ENCODE measurements at regions of chr4 and their contacts with region 1.

Region 1: DNA sequence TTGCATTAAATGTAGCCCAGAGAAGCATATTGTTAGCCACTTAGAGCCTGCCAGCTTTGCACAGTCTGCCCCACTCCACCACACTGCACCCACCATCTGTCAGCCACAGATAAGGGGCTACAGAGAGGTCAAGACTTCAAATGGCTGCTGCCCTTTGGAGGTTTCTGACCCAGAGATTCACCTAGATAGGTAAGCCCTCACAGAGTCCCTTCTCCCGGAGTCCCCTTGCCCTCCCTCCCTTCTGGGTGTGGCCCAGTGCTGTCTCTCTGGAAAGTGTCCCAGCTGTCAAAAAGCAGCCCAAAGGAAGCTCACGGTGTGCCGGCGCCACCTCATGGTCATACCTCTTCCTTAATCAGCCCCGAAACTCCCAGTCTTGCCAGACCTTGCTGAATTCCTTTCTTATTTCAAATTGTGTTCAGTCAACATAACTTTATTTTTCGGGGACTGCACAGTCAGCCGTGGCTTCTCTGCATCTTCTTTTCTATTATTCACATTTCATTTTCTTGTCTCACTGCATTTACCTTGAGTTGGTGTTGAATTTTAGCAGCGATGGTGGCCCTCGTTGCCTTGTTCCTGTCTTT is 14.1 kb upstream of the GRPEL1 start:
- DNase-seq: no peak
- ATAC-seq: peak; percentile 92
- H3K4me3 ChIP-seq: no peak overlapping the region
- H3K27ac ChIP-seq: no peak overlapping the region
- H3K4me1 ChIP-seq: no peaks in the 10 kb centered on the region
- H3K27me3 ChIP-seq: no peaks in the 10 kb centered on the region
- CTCF ChIP-seq: peak; percentile 74

Region 2: DNA sequence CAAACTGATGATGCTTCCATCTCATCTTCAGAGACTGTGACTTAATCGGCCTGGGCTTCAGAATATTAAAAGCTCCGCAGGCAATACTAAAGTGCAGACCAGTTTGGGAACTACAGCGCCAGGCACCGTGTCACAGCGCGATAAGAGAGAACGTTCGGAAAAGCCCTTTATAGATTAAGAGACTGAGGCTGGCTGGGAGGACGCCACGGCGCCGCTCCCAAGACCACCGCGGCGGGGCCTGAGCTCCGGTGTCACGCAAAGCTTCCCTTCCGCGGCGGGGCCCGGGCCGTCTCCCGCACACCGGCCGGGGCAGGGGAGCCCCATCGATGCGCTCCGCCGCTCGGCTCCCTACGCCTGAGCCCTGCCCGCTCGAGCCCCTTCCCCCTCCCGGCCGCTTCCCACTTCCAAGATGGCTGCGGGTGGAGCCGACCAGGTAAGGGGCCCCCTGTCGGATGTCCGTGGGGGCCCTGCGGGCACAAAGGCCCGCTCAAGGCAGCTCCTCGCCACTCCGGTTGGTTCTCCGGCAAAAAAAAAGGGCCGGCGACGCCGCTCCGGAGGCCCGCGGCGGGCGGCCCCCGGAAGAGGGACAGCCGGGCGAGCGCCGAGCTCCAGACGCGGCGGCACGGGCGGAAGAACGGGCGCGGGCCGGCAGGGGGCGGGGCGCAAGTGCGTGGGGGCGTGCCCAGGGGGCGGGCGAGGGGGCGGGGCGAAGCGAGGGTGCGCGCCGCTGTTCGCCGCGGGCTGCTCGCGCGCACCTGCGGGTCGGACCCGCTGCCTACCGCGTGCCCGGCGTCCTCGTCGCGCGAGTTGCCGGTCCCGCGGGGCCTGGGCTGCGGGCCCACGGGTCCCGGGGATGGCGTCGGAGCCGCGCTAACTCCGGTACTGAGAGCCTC is 172.7 kb before region 1 on chr4 and contains the start of gene TBC1D14:
- CTCF ChIA-PET with region 1: interaction called, 3 read pairs
- POLR2A ChIA-PET with region 1: interaction called, 3 read pairs
- in situ Hi-C with region 1: no loop called
- intact Hi-C with region 1: loop called (anchors 5 kb)
- DNase-seq: no peak
- ATAC-seq: peak; percentile 84
- H3K4me3 ChIP-seq: peak within 1 kb of the TSS; percentile 61 to 74
- H3K27ac ChIP-seq: peak within 1 kb of the TSS; percentile 84
- H3K4me1 ChIP-seq: peaks cover 26% of the 10 kb centered on the region
- H3K27me3 ChIP-seq: no peaks in the 10 kb centered on the region
- CTCF ChIP-seq: peak; percentile 36
- total RNA-seq, gene TBC1D14: 36.3 TPM

Region 3: DNA sequence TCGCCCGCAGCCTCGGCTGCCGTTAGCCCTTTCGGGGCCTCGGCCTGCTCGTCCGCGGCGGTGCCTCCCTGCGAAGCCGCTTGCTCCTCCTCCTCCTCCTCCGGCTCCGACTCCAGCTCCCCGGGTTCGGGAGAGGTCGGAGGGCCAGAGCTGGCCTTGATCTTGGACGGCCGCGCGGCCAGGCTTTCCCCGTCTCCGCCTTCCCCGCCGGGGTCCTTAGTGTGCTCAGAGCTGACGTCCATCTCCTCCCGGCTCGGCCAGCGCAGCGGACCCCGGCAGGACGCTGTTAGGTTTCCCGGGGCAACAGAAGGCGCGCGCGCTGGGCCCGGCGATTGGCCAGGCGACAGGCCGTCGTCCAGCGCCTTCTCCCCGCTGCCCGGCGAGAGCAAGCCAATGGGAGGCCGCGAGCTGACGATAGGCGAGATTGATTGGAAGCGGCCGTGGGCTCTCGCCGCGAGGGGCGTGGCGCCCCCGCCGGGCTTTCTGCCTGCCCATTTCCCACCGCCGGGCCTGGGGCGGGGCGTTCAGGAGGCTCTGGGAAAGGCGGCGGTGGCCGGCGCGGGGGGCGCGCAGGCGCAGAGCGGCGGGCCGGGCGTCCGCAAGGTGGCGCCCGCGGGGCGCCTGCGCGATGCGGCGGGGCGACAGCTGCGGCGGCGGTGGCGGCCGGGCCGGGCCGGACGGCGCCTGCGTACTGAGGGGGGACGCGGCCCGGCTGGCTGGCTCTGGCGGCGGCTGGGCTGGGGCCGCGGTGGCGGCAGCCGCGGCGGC is 39.1 kb before region 1 on chr4 and contains the start of gene TADA2B:
- CTCF ChIA-PET with region 1: interaction called, 10 read pairs
- POLR2A ChIA-PET with region 1: no interaction called
- in situ Hi-C with region 1: no loop called
- intact Hi-C with region 1: no loop called
- DNase-seq: peak; percentile 53
- ATAC-seq: peak; percentile 93
- H3K4me3 ChIP-seq: peak within 1 kb of the TSS; percentile 76 to 80
- H3K27ac ChIP-seq: peak within 1 kb of the TSS; percentile 81
- H3K4me1 ChIP-seq: peaks cover 30% of the 10 kb centered on the region
- H3K27me3 ChIP-seq: no peaks in the 10 kb centered on the region
- CTCF ChIP-seq: peak; percentile 83; the same call in 1 of the 2 replicates
- total RNA-seq, gene TADA2B: 17.6 TPM

Region 4: GRCh38 chr4:7691982-7692381 is 610.0 kb after region 1 on chr4:
- CTCF ChIA-PET with region 1: no interaction called
- POLR2A ChIA-PET with region 1: no interaction called
- in situ Hi-C with region 1: no loop called
- intact Hi-C with region 1: no loop called
- DNase-seq: no peak
- ATAC-seq: no peak
- H3K4me3 ChIP-seq: no peak overlapping the region
- H3K27ac ChIP-seq: no peak overlapping the region
- H3K4me1 ChIP-seq: no peaks in the 10 kb centered on the region
- H3K27me3 ChIP-seq: no peaks in the 10 kb centered on the region
- CTCF ChIP-seq: no peak

Measured in Panc1 (cell line).